ENCODE measurements at regions of chr2 and their contacts with region 1.

Region 1: GRCh38 chr2:222057347-222058073 is 241.3 kb downstream of the PAX3 start:
- DNase-seq: no peak
- H3K4me3 ChIP-seq: no peak overlapping the region
- H3K27ac ChIP-seq: no peak overlapping the region
- H3K4me1 ChIP-seq: peaks cover 0 to 6% (median 2%) of the 10 kb centered on the region in 4 experiments; a peak in 3 of 7 replicates
- H3K27me3 ChIP-seq: peaks cover 15 to 41% (median 30%) of the 10 kb centered on the region in 4 experiments
- CTCF ChIP-seq: peak in 2 of 3 experiments; percentile 32 to 46; a peak in 2 of 4 replicates
- EP300 ChIP-seq: no peak
- POLR2A ChIP-seq: no peak
- RAD21 ChIP-seq: peak; percentile 82 to 86

Region 2: GRCh38 chr2:221372159-221372884 is 685.2 kb before region 1 on chr2:
- CTCF ChIA-PET with region 1: no interaction called
- POLR2A ChIA-PET with region 1: no interaction called
- DNase-seq: peak; percentile 9 to 51
- H3K4me3 ChIP-seq: peak overlapping the region in 2 of 4 experiments; percentile 19 to 41; a peak in 5 of 8 replicates
- H3K27ac ChIP-seq: no peak overlapping the region
- H3K4me1 ChIP-seq: peaks cover 4 to 12% (median 11%) of the 10 kb centered on the region in 4 experiments
- H3K27me3 ChIP-seq: no peaks in the 10 kb centered on the region; a peak in 1 of 7 replicates
- CTCF ChIP-seq: peak in 2 of 3 experiments; percentile 43 to 65; a peak in 3 of 4 replicates
- EP300 ChIP-seq: no peak
- POLR2A ChIP-seq: no peak
- RAD21 ChIP-seq: peak; percentile 51 to 62

Region 3: DNA sequence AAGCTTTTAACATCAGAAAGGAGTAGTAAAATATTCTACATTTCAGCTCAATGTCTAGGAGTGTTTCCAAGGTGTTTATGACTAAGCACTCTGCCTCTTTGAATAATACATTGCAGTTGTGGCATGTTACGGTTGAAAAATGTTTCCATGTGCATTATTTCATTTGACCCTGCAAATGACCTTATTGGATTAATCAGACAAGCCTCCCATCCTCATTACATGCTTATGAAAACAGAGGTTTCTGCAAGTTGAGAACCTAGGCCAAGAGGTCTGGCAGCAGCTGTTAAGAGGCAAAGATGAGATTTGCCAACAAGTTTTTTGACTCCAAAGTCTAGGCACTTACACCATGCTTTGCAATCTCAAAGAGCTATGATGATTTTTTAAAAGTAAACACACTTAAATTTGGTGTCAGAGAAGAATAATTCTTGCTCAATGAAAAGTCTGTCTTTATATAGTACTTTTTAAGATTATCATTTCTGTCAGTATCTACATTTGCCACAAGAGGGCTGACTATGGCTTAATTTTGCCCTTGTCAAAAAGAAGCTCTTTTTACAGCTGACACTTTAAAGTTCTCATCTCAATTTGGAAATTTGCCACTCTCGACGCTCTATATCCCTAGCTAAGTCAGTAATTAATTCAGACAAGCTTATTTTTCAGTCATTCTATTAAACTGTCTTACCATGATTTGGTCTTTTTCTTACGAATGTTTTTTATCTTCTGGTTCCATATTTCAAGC is 19.3 kb before region 1 on chr2:
- CTCF ChIA-PET with region 1: interaction called, 95 read pairs
- POLR2A ChIA-PET with region 1: interaction called, 3 read pairs
- DNase-seq: no peak
- H3K4me3 ChIP-seq: no peak overlapping the region
- H3K27ac ChIP-seq: no peak overlapping the region
- H3K4me1 ChIP-seq: no peaks in the 10 kb centered on the region
- H3K27me3 ChIP-seq: peaks cover 0 to 4% (median 1%) of the 10 kb centered on the region in 4 experiments; a peak in 3 of 7 replicates
- CTCF ChIP-seq: peak in 2 of 3 experiments; percentile 24 to 41; a peak in 2 of 4 replicates
- EP300 ChIP-seq: no peak
- POLR2A ChIP-seq: no peak
- RAD21 ChIP-seq: peak; percentile 59 to 61

Region 4: GRCh38 chr2:222074671-222075070 is 17.2 kb after region 1 on chr2:
- CTCF ChIA-PET with region 1: interaction called, 11 read pairs
- POLR2A ChIA-PET with region 1: no interaction called
- DNase-seq: no peak
- H3K4me3 ChIP-seq: 0 out of 8 replicates have a peak overlapping the region, but pooled peaks of 1 of the 4 experiments have one; percentile 2
- H3K27ac ChIP-seq: no peak overlapping the region
- H3K4me1 ChIP-seq: peaks cover 0 to 6% (median 1%) of the 10 kb centered on the region in 4 experiments; a peak in 4 of 7 replicates
- H3K27me3 ChIP-seq: peaks cover 0 to 2% (median 0%) of the 10 kb centered on the region in 4 experiments; a peak in 1 of 7 replicates
- CTCF ChIP-seq: no peak
- EP300 ChIP-seq: no peak
- POLR2A ChIP-seq: no peak
- RAD21 ChIP-seq: no peak

Region 5: DNA sequence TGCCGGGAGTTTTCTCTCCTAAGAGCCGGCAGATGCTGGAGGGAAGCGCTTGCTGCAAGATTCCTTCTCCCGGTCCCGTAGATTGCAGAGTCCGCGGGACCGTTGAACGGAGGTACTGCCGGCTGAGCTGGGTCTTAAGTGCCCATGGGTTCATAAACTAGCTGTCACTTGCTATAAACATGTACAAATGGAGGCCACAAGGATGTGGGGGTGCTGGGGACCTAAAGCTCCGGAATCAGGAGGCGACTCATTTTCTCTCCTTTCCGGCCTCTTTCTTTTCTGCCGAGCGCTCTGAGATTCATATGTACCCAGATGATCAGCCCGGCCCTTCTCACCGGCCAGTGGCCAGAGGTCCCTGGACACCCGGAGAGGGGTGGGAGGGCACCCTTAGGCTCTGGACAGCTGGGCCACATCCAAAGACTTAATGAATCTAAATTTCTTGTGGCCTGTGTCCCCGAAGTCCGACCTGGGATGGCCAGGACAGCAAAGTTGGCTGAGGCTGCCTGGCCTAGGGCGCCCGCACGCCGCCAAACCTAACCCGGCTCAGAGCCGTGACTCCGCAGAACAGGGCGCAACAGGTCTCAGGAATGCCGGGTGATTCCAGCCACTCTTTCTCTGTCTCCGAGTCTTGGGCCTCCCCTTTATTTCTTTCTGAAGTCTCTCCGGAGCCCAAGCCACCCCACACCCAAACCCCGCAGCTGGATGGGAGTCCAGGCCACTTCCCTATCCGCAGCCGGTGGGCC is 243.7 kb after region 1 on chr2:
- CTCF ChIA-PET with region 1: interaction called, 10 read pairs
- POLR2A ChIA-PET with region 1: no interaction called
- DNase-seq: peak in 1 of 2 experiments; percentile 63
- H3K4me3 ChIP-seq: 0 out of 8 replicates have a peak overlapping the region, but pooled peaks of 1 of the 4 experiments have one; percentile 1
- H3K27ac ChIP-seq: no peak overlapping the region
- H3K4me1 ChIP-seq: peaks cover 15 to 28% (median 21%) of the 10 kb centered on the region in 4 experiments
- H3K27me3 ChIP-seq: peaks cover 95 to 100% (median 100%) of the 10 kb centered on the region in 4 experiments
- CTCF ChIP-seq: no peak
- EP300 ChIP-seq: no peak
- POLR2A ChIP-seq: no peak
- RAD21 ChIP-seq: no peak

Region 6: DNA sequence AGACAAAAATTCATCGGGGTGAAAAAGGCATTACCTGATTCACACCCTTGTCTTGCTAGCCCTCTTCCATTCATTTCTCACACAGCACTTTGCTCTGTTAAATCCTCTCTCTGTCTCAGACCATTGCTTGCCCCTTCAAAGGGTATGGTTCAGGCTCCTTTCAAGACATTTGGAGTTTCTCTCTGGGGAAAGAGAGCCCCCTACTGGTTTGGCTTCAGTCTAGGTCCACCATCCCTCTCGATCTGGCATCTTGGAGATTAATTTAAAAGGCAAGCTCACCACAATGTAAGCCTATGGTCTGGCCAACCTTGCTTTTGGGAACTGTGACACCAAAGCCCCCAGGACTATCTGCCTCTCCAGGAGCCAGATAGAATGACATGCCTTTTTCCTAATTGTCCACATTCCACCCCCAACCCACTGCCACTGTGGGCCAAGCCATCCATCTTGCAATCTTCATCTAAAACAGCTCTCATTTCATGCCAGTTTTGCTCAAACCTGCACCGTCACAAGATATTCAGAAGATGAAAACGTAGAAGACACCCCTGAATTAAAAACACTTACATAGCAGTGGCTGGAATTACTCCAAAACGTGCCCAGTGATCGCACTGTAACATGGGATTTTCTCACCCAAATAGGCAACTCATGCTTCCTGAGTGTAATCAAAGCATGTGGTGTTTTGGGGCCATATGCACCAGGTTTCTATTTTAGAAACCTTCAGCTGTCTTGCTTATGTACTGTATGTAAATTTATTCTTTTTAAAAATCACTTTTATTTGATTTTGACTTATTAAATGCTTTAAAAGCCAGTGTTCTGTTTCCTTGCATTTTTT is 504.5 kb after region 1 on chr2:
- CTCF ChIA-PET with region 1: interaction called, 13 read pairs
- POLR2A ChIA-PET with region 1: no interaction called
- DNase-seq: peak; percentile 29 to 70
- H3K4me3 ChIP-seq: no peak overlapping the region
- H3K27ac ChIP-seq: no peak overlapping the region
- H3K4me1 ChIP-seq: no peaks in the 10 kb centered on the region
- H3K27me3 ChIP-seq: no peaks in the 10 kb centered on the region; a peak in 1 of 7 replicates
- CTCF ChIP-seq: peak; percentile 37 to 78 (median 78)
- EP300 ChIP-seq: no peak
- POLR2A ChIP-seq: no peak
- RAD21 ChIP-seq: peak; percentile 92 to 96

Measured in H1 (cell line).